OCI-LY7 (cell line): ENCODE measurements at regions of chr2 and their contacts with region 1.

Region 1: DNA sequence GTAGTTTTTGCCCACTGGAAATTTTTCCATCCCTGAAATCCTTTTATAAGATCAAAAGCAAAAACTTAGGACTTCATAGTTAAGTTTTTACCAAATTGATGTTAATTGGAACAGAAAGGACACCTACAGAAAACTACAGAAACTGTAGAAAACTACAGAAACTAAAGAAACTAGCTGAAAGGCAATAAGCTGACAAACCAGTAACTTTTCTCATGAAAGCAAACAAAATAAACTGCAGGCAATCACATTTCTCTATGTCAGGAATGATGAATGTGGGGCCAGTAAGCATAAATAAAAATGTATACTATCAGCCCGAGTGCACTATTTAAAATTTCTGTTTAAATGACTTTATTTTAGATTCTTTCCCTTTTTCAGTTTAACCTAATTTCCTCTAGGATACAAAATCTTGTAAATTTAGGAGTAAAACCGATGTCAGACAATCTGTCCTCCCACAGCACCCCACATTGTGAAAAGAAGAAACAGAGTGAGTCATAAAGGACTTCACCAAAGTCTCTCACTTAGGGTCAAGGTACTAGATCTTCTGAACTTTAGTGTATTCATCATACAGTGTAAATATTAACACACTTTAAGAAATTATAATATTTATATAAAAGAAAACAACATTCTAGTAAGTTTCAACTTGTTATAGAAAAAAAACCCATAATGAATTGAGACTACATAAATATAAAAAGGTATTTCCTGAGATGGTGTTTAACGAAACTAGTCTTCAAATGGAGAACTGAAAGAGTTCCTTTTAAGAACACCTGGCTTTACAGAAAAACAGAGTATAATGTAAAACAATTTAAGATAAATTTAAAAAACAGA is 46.6 kb downstream of the USP40 start:
- DNase-seq: peak; percentile 84
- H3K4me3 ChIP-seq: peak overlapping the region; percentile 51
- H3K27ac ChIP-seq: peak overlapping the region; percentile 98
- H3K4me1 ChIP-seq: peaks cover 64% of the 10 kb centered on the region
- CTCF ChIP-seq: no peak; the same call in 1 of the 2 replicates

Region 2: GRCh38 chr2:232574674-232575403 is 945.2 kb before region 1 on chr2:
- CTCF ChIA-PET with region 1: no interaction called
- POLR2A ChIA-PET with region 1: no interaction called
- intact Hi-C with region 1: no loop called
- DNase-seq: no peak
- H3K4me3 ChIP-seq: no peak overlapping the region
- H3K27ac ChIP-seq: no peak overlapping the region
- H3K4me1 ChIP-seq: no peaks in the 10 kb centered on the region
- CTCF ChIP-seq: no peak

Region 3: DNA sequence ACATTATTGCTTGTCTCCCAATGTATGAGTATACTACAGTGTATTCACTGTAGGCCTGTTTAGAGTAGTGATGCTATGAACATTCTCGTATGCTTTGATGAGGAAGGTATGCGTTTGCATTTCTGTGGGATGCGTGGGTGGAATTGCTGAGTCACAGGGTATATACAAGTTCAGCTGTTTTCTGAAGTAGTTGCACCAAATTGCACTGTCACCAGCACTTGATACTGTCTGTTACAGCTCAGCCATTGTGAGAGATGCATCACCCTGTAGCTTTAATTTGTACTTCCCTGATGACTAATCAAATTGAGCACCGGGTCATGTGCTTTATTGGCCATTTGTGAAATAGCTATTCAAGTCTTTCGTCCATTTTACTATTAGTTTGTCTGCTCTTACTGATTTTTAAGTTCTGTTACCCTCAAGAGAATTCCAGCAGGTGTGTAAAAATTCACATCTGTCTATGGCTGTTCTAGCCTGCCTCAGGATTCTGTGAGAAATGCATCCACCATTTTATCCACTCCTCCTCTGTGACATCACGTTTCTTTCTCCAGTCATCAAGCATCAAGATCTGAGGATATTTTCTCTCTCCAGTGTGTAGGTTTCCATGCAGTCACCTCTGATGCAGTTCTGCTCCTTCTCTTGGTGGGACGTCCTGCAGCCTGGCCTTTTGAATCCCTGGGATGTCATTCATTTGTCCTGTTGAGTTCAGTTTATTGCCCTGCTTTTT is 93.2 kb before region 1 on chr2:
- CTCF ChIA-PET with region 1: no interaction called
- POLR2A ChIA-PET with region 1: no interaction called
- intact Hi-C with region 1: no loop called
- DNase-seq: no peak
- H3K4me3 ChIP-seq: no peak overlapping the region
- H3K27ac ChIP-seq: no peak overlapping the region
- H3K4me1 ChIP-seq: peaks cover 12% of the 10 kb centered on the region
- CTCF ChIP-seq: no peak

Region 4: DNA sequence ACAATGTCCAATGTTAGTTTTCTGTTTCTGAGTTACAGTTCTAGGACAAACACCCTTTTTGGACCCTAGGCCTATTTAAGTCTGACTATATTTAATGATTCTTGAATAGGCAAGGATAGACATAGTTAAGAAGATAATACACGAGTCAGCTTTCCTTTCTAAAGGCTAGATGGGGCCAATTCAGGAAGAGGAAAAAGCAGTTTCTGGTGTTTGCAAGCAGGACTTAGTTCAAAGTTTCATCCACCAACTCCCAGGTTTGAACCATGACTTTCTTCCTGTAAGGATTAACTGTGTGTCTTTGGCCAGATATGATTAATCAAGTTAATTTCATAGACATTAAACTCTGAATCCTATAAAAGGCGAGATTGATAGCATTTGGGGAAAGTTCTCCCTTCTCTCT is 20.1 kb before region 1 on chr2:
- CTCF ChIA-PET with region 1: no interaction called
- POLR2A ChIA-PET with region 1: interaction called, 11 read pairs
- intact Hi-C with region 1: no loop called
- DNase-seq: no peak
- H3K4me3 ChIP-seq: no peak overlapping the region
- H3K27ac ChIP-seq: no peak overlapping the region
- H3K4me1 ChIP-seq: peaks cover 7% of the 10 kb centered on the region
- CTCF ChIP-seq: no peak

Region 5: GRCh38 chr2:233650981-233651380 is 131.0 kb after region 1 on chr2:
- CTCF ChIA-PET with region 1: no interaction called
- POLR2A ChIA-PET with region 1: no interaction called
- intact Hi-C with region 1: no loop called
- DNase-seq: no peak
- H3K4me3 ChIP-seq: no peak overlapping the region
- H3K27ac ChIP-seq: no peak overlapping the region
- H3K4me1 ChIP-seq: no peaks in the 10 kb centered on the region
- CTCF ChIP-seq: no peak